ENCODE measurements at regions of chr13 and their contacts with region 1.

Region 1: GRCh38 chr13:49840266-49840665 is 47.8 kb upstream of the KPNA3 start:
- DNase-seq: peak; percentile 10
- ATAC-seq: no peak
- H3K4me3 Mint-ChIP-seq: no peak overlapping the region
- H3K27ac Mint-ChIP-seq: no peak overlapping the region
- H3K4me1 Mint-ChIP-seq: no peaks in the 10 kb centered on the region
- H3K27me3 Mint-ChIP-seq: no peaks in the 10 kb centered on the region
- CTCF ChIP-seq: no peak

Region 2: GRCh38 chr13:49669735-49670309 is 170.4 kb before region 1 on chr13:
- CTCF ChIA-PET with region 1: no interaction called
- POLR2A ChIA-PET with region 1: no interaction called
- intact Hi-C with region 1: loop called (anchors 5 kb)
- DNase-seq: peak; percentile 41
- ATAC-seq: peak; percentile 61
- H3K4me3 Mint-ChIP-seq: no peak overlapping the region
- H3K27ac Mint-ChIP-seq: no peak overlapping the region
- H3K4me1 Mint-ChIP-seq: no peaks in the 10 kb centered on the region
- H3K27me3 Mint-ChIP-seq: no peaks in the 10 kb centered on the region
- CTCF ChIP-seq: peak; percentile 64

Region 3: GRCh38 chr13:49858183-49858856 is 18.1 kb after region 1 on chr13:
- CTCF ChIA-PET with region 1: no interaction called
- POLR2A ChIA-PET with region 1: no interaction called
- intact Hi-C with region 1: no loop called
- DNase-seq: no peak
- ATAC-seq: no peak
- H3K4me3 Mint-ChIP-seq: no peak overlapping the region
- H3K27ac Mint-ChIP-seq: no peak overlapping the region
- H3K4me1 Mint-ChIP-seq: no peaks in the 10 kb centered on the region
- H3K27me3 Mint-ChIP-seq: peaks cover 1% of the 10 kb centered on the region
- CTCF ChIP-seq: no peak